ENCODE measurements at regions of chr11 and their contacts with region 1.

Region 1: GRCh38 chr11:20403059-20403458 is 15.5 kb downstream of the PRMT3 start:
- DNase-seq: no peak
- CTCF ChIP-seq: no peak

Region 2: GRCh38 chr11:20353829-20354434 is 49.1 kb before region 1 on chr11:
- CTCF ChIA-PET with region 1: no interaction called
- POLR2A ChIA-PET with region 1: no interaction called
- DNase-seq: peak; percentile 35
- CTCF ChIP-seq: peak; percentile 84

Region 3: GRCh38 chr11:20388096-20389055 is 14.7 kb before region 1 on chr11:
- CTCF ChIA-PET with region 1: interaction called, 14 read pairs
- POLR2A ChIA-PET with region 1: no interaction called
- DNase-seq: peak; percentile 23
- CTCF ChIP-seq: no peak